ENCODE measurements at regions of chr17 and their contacts with region 1.

Region 1: GRCh38 chr17:50297407-50297865 is 23.2 kb downstream of the TMEM92 start:
- DNase-seq: peak; percentile 55 to 97 (median 76)

Region 2: DNA sequence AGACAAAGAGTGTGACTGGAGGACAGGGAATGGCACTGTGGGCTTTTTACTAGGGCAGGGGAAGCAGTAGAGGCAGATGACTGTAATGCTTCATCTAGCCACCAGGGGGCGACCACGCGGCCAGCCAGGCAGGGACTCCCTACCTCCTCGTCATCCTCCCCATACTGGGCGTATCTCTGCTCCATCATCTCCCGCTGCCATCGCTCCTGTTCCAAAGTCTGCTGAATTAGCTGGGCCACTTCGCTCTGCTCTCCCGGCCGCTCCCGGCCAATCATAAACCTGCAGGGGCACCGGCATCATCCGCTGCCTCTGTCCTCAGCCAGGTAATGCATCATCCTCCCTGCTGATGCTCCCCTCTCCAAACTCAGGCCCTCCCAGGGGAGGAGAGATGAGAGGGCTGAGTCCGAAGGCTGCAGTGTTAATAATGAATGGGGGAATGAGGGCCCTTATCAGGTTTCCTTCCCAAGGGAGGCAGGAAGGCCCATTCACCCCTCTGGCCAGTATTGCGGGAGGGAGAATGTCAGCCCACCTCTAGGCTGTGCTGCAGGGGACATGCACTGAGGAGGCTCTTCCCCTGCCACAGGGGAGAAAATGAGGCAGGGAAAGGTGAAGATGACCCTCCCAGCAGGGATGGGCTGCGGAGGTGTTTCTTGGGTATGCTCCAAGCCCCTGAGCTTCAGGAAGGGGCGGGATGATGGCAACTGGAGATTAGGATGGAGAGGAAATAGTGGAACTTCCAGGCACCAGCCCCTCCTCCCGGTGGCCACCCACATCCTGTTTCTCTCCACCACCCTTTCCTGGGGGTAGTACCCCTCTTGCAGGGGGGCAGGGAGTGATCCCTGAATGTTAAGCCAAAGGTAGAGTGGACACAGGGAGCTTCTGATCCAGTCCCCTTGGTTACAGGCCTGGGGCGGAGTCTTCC is 157.2 kb before region 1 on chr17:
- intact Hi-C with region 1: loop called (anchors 10 kb)
- DNase-seq: peak in 9 of 10 donors; percentile 66 to 97 (median 84)